ENCODE measurements at regions of chr12 and their contacts with region 1.

Region 1: DNA sequence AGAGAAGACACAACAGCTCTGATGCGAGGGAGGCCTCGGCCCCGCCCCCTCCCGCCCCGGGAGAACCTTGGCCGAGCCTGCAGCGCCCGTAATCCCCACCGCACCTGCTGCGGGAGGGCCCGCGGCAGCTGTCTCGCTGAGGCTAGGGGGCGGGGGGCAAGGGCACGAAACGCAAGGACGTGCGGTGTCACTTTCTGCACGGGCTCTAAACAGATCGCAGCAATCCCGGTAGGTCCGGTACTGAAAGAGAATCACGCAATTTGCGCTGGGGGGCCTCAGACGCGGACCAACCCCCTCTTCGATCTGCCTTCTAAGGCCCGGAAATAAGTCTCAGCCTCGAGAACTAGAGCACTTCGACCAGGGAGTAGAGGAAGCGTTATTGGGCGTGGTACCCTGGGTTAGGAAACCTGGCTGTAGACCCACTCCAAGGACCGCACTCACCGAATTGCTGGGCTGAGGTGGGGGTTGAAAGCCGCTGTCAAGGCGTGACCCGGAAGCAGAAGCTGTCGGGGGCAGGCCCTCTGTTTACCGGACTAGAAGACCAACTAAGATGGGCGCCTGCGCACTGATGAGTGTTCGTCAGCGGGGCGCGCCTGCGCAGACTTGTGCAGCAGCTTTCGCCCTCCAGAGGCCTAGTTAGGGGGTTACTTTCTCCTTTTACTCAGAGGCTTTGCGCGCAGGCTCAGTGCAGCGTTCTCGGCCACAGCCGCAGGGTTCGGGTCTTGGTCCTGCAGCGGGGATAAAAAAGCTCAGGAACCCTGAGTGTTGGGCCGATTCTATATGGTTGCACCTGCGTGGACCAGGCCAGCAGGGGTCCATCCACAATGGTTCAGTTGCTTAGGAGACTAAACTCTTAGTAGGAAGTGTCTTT is at the start of gene ASB8:
- DNase-seq: peak; percentile 99
- total RNA-seq, gene ASB8: 69.4 TPM

Region 2: GRCh38 chr12:46944088-46944487 is 1213.2 kb before region 1 on chr12:
- intact Hi-C with region 1: no loop called
- DNase-seq: no peak

Region 3: GRCh38 chr12:48001505-48002413 is 155.5 kb before region 1 on chr12:
- intact Hi-C with region 1: no loop called
- DNase-seq: no peak

Region 4: DNA sequence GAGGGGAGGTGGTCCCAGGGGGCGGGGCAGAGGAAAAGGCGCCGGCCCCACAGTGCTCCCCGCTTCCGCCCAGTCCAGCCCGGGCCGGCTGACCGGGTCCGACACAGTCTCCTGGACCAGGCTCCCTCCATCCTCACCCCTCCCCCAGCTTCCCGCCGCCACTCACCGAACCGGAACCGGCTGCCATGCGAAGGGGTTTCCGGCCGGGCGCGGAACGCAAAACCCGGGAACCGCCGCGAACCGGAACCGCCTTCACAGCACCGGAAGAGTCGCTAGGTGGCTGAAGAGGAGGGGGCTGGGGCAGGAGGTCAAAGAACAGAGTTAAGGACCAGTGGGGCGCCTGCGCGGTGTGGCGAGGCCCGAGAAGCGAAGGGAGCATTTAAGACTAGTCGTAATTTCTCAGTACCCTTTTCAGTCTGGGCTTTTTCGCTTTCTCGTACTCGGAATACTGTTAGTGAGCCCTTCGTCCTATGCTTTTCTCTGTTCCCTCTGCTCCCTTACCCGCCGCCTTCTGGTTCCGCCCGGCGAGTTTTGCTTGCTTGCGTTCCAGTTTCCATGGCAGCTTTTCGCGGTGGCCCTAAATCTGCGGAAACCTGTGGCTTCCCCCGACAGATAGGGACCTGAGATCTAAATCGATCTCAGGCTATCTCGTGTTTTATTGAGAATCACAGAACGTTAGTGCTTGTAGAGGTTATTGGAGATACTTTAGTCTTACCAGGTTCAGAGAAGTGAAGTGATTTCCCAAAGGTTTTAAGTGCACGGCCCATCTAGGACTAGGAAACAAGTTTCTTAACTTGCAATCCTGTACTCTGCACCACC is 51.2 kb before region 1 on chr12 and contains the start of gene SENP1:
- intact Hi-C with region 1: loop called (anchors 2 kb)
- DNase-seq: peak; percentile 93
- total RNA-seq, gene SENP1: 10.1 TPM

Region 5: GRCh38 chr12:48119834-48120195 is 37.4 kb before region 1 on chr12:
- intact Hi-C with region 1: loop called (anchors 5 kb)
- DNase-seq: no peak

Region 6: GRCh38 chr12:48175613-48176416 is 18.6 kb after region 1 on chr12:
- intact Hi-C with region 1: no loop called
- DNase-seq: no peak

Region 7: GRCh38 chr12:48216785-48217184 is 59.5 kb after region 1 on chr12:
- intact Hi-C with region 1: no loop called
- DNase-seq: no peak

Measured in cardiac septum (tissue), 1 donor.